PC-9 (cell line): ENCODE measurements at regions of chr9 and their contacts with region 1.

Region 1: GRCh38 chr9:19879062-19879461 is 90.2 kb upstream of the SLC24A2 start:
- DNase-seq: no peak
- H3K4me3 ChIP-seq: no peak overlapping the region
- H3K27ac ChIP-seq: no peak overlapping the region
- H3K4me1 ChIP-seq: no peaks in the 10 kb centered on the region
- H3K27me3 ChIP-seq: peaks cover 6% of the 10 kb centered on the region; the same call in 1 of the 2 replicates
- CTCF ChIP-seq: no peak

Region 2: DNA sequence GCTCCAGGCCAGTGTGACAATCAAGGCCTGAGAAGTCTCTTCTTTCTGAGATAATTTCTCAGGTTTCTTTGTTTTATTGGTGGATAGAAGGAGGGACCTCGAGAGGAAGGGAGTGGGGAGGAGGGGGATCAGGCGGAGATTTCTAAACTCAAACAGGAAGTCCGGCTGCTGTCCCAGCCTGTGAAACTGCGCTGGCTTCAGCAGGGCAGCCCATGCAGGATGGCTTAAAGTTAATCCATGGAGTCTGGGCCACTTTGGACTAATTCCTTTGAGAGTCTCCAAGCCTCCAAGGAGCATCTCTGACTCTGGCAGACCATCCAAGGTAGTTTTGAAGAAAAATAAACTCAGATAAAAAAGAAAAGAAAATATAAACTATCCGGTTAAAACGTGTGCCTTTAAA is 364.8 kb after region 1 on chr9:
- CTCF ChIA-PET with region 1: no interaction called
- POLR2A ChIA-PET with region 1: interaction called, 11 read pairs
- intact Hi-C with region 1: no loop called
- DNase-seq: no peak
- H3K4me3 ChIP-seq: no peak overlapping the region
- H3K27ac ChIP-seq: no peak overlapping the region
- H3K4me1 ChIP-seq: no peaks in the 10 kb centered on the region
- H3K27me3 ChIP-seq: no peaks in the 10 kb centered on the region
- CTCF ChIP-seq: no peak